ENCODE measurements at regions of chr3 and their contacts with region 1.

Region 1: DNA sequence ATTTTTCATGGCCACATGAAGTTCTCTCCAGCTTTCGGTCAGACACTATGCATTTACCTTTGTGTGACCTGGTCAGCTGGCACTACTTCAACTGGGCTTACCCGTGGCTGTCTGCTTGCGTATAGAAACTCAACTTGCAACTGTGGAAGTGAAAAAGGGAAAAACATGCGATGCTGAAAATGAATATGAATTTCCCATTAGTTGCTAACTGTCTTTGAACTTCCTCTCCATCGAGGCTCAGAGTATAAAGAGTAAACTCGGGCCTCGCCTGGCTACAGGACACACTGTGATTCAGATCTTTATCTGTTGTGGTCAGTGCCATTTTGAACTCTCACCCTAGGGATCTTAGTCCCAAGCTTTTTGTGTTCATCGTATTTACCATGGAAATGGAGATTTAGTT is 26.8 kb downstream of the NFKBIZ start:
- DNase-seq: no peak
- ATAC-seq: peak; percentile 72
- H3K4me3 Mint-ChIP-seq: peak overlapping the region; percentile 21
- H3K27ac Mint-ChIP-seq: peak overlapping the region; percentile 81
- H3K4me1 Mint-ChIP-seq: peaks cover 51% of the 10 kb centered on the region
- H3K27me3 Mint-ChIP-seq: no peaks in the 10 kb centered on the region
- CTCF ChIP-seq: no peak

Region 2: DNA sequence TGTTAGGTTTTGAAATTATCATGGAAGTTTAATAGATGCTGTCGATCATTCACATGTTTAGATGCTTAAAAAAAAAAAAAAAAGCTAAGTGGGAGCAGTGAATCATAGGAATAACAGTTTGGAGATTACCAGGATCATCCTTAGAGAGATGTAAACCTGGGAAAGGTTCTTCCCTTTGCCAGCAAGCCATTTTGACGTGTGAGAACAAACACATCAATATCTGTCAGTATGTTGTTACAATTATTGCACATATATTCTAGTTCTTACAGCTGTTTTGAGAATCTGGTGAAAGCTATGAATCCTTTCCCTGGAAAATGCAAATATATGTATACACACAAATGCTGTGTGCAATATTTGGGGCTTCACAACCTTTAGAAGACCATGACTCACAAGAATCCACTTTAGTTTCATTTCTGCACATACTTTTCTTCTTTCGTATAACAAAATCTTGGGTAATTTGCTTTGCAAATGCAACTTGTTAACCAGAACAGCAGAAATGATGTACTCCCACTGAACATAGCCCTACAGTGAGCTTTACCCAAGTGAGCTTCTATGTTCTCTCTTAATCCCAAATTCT is 14.8 kb before region 1 on chr3:
- CTCF ChIA-PET with region 1: no interaction called
- POLR2A ChIA-PET with region 1: interaction called, 15 read pairs
- intact Hi-C with region 1: loop called (anchors 1 kb)
- DNase-seq: no peak
- ATAC-seq: peak; percentile 64
- H3K4me3 Mint-ChIP-seq: peak overlapping the region; percentile 51
- H3K27ac Mint-ChIP-seq: peak overlapping the region; percentile 75
- H3K4me1 Mint-ChIP-seq: peaks cover 76% of the 10 kb centered on the region
- H3K27me3 Mint-ChIP-seq: no peaks in the 10 kb centered on the region
- CTCF ChIP-seq: no peak

Measured in activated B cell treated with CpG ODN at 0.5 μM for 24 hours (primary cell).